Endothelial cell of umbilical vein (primary cell): ENCODE measurements at regions of chr11 and their contacts with region 1.

Region 1: GRCh38 chr11:94623120-94623735 is 56.1 kb downstream of the PIWIL4 start:
- DNase-seq: peak; percentile 89
- H3K4me3 ChIP-seq: no peak overlapping the region
- H3K27ac ChIP-seq: no peak overlapping the region
- H3K4me1 ChIP-seq: no peaks in the 10 kb centered on the region
- H3K27me3 ChIP-seq: no peaks in the 10 kb centered on the region
- CTCF ChIP-seq: peak; percentile 58 to 72
- POLR2A ChIP-seq: no peak

Region 2: GRCh38 chr11:94731880-94732601 is 108.8 kb after region 1 on chr11:
- CTCF ChIA-PET with region 1: interaction called, 16 read pairs
- POLR2A ChIA-PET with region 1: no interaction called
- dilution Hi-C with region 1: no loop called
- intact Hi-C with region 1: no loop called
- DNase-seq: peak; percentile 38
- H3K4me3 ChIP-seq: no peak overlapping the region
- H3K27ac ChIP-seq: peak overlapping the region; percentile 79
- H3K4me1 ChIP-seq: peaks cover 35% of the 10 kb centered on the region
- H3K27me3 ChIP-seq: no peaks in the 10 kb centered on the region
- CTCF ChIP-seq: no peak
- POLR2A ChIP-seq: no peak

Region 3: DNA sequence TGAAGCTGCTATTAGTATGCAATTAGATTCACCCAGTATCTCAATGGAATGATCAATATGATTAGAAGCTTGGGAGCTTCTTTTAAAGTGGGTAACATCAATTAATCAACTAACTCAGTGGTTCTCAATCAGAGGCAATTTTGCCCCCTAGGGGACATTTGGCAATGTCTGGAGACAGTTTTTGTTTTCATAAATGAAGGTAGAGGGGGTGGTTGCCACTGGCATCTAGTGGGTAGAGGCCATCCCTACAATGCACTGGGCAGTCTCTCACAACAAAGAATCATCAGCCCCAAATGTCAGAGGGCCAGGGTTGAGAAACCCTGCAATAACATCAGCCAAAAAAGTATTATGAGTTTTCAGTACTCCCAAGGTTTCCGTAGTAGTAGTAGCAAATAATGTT is 139.0 kb after region 1 on chr11:
- CTCF ChIA-PET with region 1: interaction called, 83 read pairs
- POLR2A ChIA-PET with region 1: no interaction called
- dilution Hi-C with region 1: no loop called
- intact Hi-C with region 1: loop called (anchors 1 kb)
- DNase-seq: peak; percentile 47
- H3K4me3 ChIP-seq: no peak overlapping the region
- H3K27ac ChIP-seq: no peak overlapping the region
- H3K4me1 ChIP-seq: peaks cover under 1% of the 10 kb centered on the region
- H3K27me3 ChIP-seq: no peaks in the 10 kb centered on the region
- CTCF ChIP-seq: peak; percentile 52 to 58
- POLR2A ChIP-seq: no peak

Region 4: GRCh38 chr11:94834911-94835593 is 211.8 kb after region 1 on chr11:
- CTCF ChIA-PET with region 1: interaction called, 10 read pairs
- POLR2A ChIA-PET with region 1: no interaction called
- dilution Hi-C with region 1: no loop called
- intact Hi-C with region 1: loop called (anchors 1 kb)
- DNase-seq: peak; percentile 32
- H3K4me3 ChIP-seq: no peak overlapping the region
- H3K27ac ChIP-seq: no peak overlapping the region
- H3K4me1 ChIP-seq: peaks cover 11% of the 10 kb centered on the region
- H3K27me3 ChIP-seq: no peaks in the 10 kb centered on the region
- CTCF ChIP-seq: no peak
- POLR2A ChIP-seq: no peak

Region 5: GRCh38 chr11:94897330-94897768 is 274.1 kb after region 1 on chr11:
- CTCF ChIA-PET with region 1: interaction called, 61 read pairs
- POLR2A ChIA-PET with region 1: no interaction called
- dilution Hi-C with region 1: no loop called
- intact Hi-C with region 1: loop called (anchors 1 kb)
- DNase-seq: peak; percentile 61
- H3K4me3 ChIP-seq: no peak overlapping the region
- H3K27ac ChIP-seq: no peak overlapping the region
- H3K4me1 ChIP-seq: peaks cover 11% of the 10 kb centered on the region
- H3K27me3 ChIP-seq: no peaks in the 10 kb centered on the region
- CTCF ChIP-seq: peak; percentile 81 to 85
- POLR2A ChIP-seq: no peak

Region 6: GRCh38 chr11:95150946-95151684 is 527.9 kb after region 1 on chr11:
- CTCF ChIA-PET with region 1: interaction called, 4 read pairs
- POLR2A ChIA-PET with region 1: no interaction called
- dilution Hi-C with region 1: no loop called
- intact Hi-C with region 1: loop called (anchors 1 kb)
- DNase-seq: peak; percentile 92
- H3K4me3 ChIP-seq: peak overlapping the region; percentile 9 to 39 (median 34)
- H3K27ac ChIP-seq: peak overlapping the region; percentile 62
- H3K4me1 ChIP-seq: peaks cover 36% of the 10 kb centered on the region
- H3K27me3 ChIP-seq: no peaks in the 10 kb centered on the region
- CTCF ChIP-seq: peak; percentile 73 to 84
- POLR2A ChIP-seq: no peak